Sigmoid colon (tissue), 7 donors: ENCODE measurements at regions of chrX and their contacts with region 1.

Region 1: GRCh38 chrX:20527558-20528011 is 260.9 kb upstream of the RPS6KA3 start:
- DNase-seq: no peak
- H3K4me3 ChIP-seq: no peak overlapping the region
- H3K27ac ChIP-seq: no peak overlapping the region
- H3K4me1 ChIP-seq: peaks cover 0 to 23% (median 3%) of the 10 kb centered on the region in 4 donors
- H3K27me3 ChIP-seq: no peaks in the 10 kb centered on the region
- CTCF ChIP-seq: peak; percentile 28 to 50 (median 36)
- EP300 ChIP-seq: no peak
- POLR2A ChIP-seq: no peak

Region 2: GRCh38 chrX:21374163-21374993 is 846.8 kb after region 1 on chrX and contains the start of gene CNKSR2:
- intact Hi-C with region 1: loop called (anchors 10 kb)
- DNase-seq: peak; percentile 75
- H3K4me3 ChIP-seq: peak within 1 kb of the TSS; percentile 38 to 59 (median 54)
- H3K27ac ChIP-seq: peak within 1 kb of the TSS; percentile 12 to 72 (median 50)
- H3K4me1 ChIP-seq: peaks cover 0 to 6% (median 6%) of the 10 kb centered on the region in 4 donors
- H3K27me3 ChIP-seq: peaks cover 0 to 4% (median 0%) of the 10 kb centered on the region in 3 donors
- CTCF ChIP-seq: no peak
- EP300 ChIP-seq: no peak
- POLR2A ChIP-seq: no peak
- total RNA-seq, gene CNKSR2: 3.3 to 6.1 (median 4.0) TPM

Region 3: GRCh38 chrX:21479695-21480270 is 952.2 kb after region 1 on chrX:
- intact Hi-C with region 1: loop called (anchors 5 kb)
- DNase-seq: no peak
- H3K4me3 ChIP-seq: no peak overlapping the region
- H3K27ac ChIP-seq: no peak overlapping the region
- H3K4me1 ChIP-seq: no peaks in the 10 kb centered on the region
- H3K27me3 ChIP-seq: no peaks in the 10 kb centered on the region
- CTCF ChIP-seq: peak in 3 of 4 experiments; percentile 29 to 44 (median 39)
- EP300 ChIP-seq: no peak
- POLR2A ChIP-seq: no peak

Region 4: GRCh38 chrX:21745756-21746155 is 1218.2 kb after region 1 on chrX:
- intact Hi-C with region 1: loop called (anchors 5 kb)
- DNase-seq: no peak
- H3K4me3 ChIP-seq: no peak overlapping the region
- H3K27ac ChIP-seq: no peak overlapping the region
- H3K4me1 ChIP-seq: peaks cover 0 to 23% (median 0%) of the 10 kb centered on the region in 4 donors
- H3K27me3 ChIP-seq: no peaks in the 10 kb centered on the region
- CTCF ChIP-seq: peak in 2 of 4 experiments; percentile 24 to 30
- EP300 ChIP-seq: no peak
- POLR2A ChIP-seq: no peak

Region 5: DNA sequence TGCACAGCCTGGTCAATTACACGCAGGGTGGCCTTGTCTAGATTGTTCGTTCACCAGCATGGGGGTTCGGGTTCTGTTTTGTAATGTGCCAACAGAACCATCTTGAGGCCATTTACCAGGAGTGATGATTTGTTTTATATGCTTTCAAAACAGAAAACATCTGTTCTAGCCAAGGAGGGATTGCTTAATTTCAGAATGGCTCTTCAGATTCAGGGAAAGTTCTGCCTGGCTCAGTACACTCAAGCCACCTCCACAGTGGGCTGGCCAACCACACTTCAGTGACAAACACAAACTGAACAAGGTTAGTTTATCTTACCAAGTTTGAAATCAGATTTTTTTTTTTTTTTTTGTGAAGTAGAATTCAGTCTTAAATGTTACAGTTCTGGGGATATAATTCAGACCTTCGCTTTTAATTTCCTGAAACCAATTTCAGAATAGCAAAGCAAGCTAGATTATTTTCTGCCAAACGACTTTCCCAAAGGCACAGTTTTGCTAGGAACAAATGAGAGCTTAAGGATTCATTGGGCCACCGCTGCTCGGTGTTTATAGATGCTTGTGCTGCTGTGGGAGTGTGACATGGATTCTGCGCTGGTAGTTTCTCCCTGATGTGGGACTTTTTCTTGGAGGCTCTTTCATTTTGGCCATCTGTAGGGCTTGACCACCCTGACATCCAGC is 1436.3 kb after region 1 on chrX:
- intact Hi-C with region 1: loop called (anchors 10 kb)
- DNase-seq: no peak
- H3K4me3 ChIP-seq: no peak overlapping the region
- H3K27ac ChIP-seq: peak overlapping the region in 3 of 4 donors; percentile 1 to 61 (median 42)
- H3K4me1 ChIP-seq: peaks cover 0 to 32% (median 18%) of the 10 kb centered on the region in 4 donors
- H3K27me3 ChIP-seq: no peaks in the 10 kb centered on the region
- CTCF ChIP-seq: no peak
- EP300 ChIP-seq: no peak
- POLR2A ChIP-seq: no peak